Dorsolateral prefrontal cortex (tissue), 120 donors: ENCODE measurements at regions of chr2 and their contacts with region 1.

Region 1: GRCh38 chr2:211035548-211036185 is 479.3 kb downstream of the CPS1 start:
- DNase-seq: no peak
- H3K4me3 ChIP-seq: no peak overlapping the region
- H3K27ac ChIP-seq: no peak overlapping the region
- H3K27me3 ChIP-seq: peaks cover 0 to 5% (median 0%) of the 10 kb centered on the region in 45 donors
- CTCF ChIP-seq: peak; percentile 33 to 87 (median 63)

Region 2: DNA sequence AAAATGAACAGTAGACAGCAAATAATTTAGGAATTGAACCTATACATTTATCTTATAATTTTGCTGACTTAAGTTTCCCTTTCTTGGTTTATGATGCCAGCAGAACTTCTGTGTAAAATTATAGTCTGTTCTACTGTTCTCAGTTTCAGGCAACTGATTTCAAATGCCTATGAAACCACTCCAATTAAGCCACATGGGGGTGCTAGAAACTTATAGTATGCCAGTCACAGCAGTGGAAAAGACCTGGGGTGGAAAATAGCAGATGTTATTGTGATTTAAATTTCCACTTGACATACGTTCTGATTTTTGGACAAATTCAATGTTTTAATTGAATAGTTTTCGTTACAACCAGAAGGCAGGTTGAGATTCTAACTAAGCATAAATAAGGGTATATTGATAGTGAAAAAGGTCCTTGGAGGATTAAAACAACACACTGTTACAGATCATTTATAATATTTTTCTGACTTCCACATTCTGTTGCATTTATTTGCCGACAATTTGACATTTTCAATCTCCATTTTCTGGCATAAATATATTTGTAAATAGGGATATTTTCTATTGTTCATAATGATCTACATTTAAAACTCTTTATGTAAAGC is 417.8 kb before region 1 on chr2:
- intact Hi-C with region 1: loop called in 1 of 2 experiments (anchors 10 kb)
- DNase-seq: peak in 3 of 10 donors; percentile 12 to 43 (median 31)
- H3K4me3 ChIP-seq: no peak overlapping the region
- H3K27ac ChIP-seq: peak overlapping the region in 24 of 59 donors; percentile 2 to 67 (median 24)
- H3K27me3 ChIP-seq: no peaks in the 10 kb centered on the region
- CTCF ChIP-seq: peak; percentile 50 to 88 (median 76)

Region 3: DNA sequence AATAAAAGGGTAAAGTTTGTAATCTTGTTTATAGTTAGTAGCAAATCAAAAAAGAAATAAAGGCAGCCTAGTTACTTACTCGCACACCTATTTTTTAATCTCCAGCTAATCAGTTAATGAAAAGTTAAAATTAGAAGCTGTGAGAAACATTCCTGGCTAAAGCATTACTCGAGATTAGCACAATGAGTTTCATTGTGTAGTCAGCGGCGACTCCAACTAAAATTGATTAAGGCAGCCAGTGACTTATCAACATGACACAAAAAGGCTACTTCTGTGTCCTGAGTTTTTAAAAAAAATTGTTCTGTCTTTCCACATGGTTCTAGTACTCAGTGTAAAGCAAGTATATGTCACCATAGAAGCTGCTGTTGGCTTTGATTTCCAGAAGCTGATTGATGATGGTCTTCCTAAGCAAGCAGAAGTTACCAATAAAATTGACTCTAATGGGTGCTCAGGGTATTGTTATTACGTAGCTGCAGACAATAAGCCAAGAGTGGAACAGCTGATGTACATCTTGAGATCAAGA is 320.0 kb before region 1 on chr2:
- intact Hi-C with region 1: no loop called
- DNase-seq: no peak
- H3K4me3 ChIP-seq: no peak overlapping the region
- H3K27ac ChIP-seq: no peak overlapping the region
- H3K27me3 ChIP-seq: peaks cover 0 to 2% (median 0%) of the 10 kb centered on the region in 45 donors
- CTCF ChIP-seq: no peak